Heart right ventricle (tissue), 16 donors: ENCODE measurements at regions of chr9 and their contacts with region 1.

Region 1: DNA sequence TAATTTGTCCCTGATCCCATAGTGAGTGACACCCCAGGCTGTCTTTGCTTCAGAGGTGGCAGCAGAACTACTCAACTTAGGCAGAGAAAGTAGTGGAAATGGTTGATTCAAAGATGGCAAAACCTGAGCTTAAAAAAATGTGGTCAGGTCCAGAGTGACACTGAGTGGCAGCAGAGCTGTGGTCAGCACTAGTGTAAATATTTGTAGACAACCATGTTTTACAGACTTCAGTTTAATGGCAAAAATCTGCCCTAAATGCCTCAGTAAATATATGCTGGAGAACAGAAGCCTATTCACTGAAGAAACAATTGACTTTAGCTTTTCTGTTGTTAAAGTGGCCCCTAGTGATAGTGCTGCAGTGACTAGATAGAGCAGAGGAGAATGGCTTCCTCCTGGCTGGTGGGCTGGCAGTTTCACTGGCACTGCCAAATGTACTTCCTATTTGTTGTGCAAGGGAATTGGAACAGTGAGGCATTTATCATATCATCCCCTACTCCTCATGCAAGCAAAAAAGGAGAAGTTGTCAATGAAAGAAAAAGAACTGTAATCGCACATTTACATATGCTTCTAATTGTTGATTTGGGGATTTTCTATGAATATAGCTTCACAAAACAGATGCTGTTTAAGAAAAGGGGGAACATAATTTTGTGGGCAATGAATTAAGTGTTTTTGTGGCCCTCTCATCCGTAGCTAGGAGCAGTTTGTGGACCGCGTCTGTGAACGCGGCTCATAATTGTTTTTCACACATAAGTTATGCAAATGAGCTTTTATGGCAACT is 12.0 kb downstream of the PBX3 start:
- DNase-seq: peak in 1 of 2 donors; percentile 20
- ATAC-seq: peak; percentile 23 to 80 (median 70)
- H3K4me3 ChIP-seq: peak overlapping the region in 7 of 10 donors; percentile 0 to 45 (median 32)
- H3K27ac ChIP-seq: peak overlapping the region in 2 of 10 donors; percentile 17 to 52
- H3K4me1 ChIP-seq: peaks cover 0 to 91% (median 69%) of the 10 kb centered on the region in 9 donors
- H3K27me3 ChIP-seq: no peaks in the 10 kb centered on the region
- CTCF ChIP-seq: no peak

Region 2: DNA sequence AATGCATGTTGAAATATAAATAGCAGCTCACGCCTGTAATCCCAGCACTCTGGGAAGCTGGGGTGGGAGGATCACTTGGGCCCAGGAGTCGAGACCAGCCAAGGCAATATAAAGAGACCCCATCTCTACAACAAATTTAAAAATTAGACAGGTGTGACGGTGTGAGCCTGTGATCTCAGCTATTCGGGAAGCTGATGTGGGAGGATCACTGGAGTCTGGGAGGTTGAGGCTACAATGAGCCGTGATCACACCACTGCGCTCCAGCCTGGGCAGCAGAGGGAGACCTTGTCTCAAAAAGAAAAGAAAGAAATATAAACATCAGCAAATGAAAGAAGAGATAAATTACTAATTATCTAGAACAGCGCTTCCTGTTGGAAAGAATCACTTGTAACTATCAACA is 157.2 kb before region 1 on chr9:
- intact Hi-C with region 1: no loop called
- DNase-seq: no peak
- ATAC-seq: no peak
- H3K4me3 ChIP-seq: no peak overlapping the region
- H3K27ac ChIP-seq: no peak overlapping the region
- H3K4me1 ChIP-seq: no peaks in the 10 kb centered on the region
- H3K27me3 ChIP-seq: no peaks in the 10 kb centered on the region
- CTCF ChIP-seq: peak in 1 of 9 donors; percentile 12

Region 3: DNA sequence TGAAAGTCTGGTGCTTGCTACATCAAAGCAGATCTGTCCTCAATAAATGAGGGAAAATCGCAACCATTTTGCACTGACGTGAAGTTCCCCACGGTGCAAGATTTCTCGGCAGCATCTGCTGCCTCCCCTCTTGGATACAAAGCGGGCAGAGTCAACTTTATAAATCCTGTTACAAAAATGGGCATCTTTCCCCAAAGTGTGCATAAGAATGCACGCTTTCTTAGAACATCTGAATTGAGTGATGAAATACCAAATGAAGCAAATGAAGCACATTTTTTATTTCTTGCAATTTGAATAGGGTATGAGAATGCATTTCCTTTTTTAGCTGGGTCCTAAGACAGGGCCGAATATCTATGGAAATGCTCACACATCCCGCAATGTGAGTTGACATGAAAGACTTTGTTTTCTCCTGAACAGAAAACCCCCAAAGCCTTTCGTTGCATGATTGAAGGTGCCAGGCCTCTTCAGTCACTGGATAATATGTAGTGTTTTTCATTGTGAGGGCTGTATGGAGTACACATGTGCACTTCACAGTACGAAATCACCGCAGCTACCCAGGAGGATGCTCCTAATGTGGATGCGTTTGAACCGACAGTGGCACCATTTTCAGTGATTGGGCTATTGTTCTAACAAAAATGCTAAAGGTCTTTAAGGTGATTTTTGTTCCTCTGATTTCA is 32.6 kb before region 1 on chr9:
- intact Hi-C with region 1: no loop called
- DNase-seq: no peak
- ATAC-seq: no peak
- H3K4me3 ChIP-seq: no peak overlapping the region
- H3K27ac ChIP-seq: no peak overlapping the region
- H3K4me1 ChIP-seq: no peaks in the 10 kb centered on the region
- H3K27me3 ChIP-seq: no peaks in the 10 kb centered on the region
- CTCF ChIP-seq: no peak

Region 4: DNA sequence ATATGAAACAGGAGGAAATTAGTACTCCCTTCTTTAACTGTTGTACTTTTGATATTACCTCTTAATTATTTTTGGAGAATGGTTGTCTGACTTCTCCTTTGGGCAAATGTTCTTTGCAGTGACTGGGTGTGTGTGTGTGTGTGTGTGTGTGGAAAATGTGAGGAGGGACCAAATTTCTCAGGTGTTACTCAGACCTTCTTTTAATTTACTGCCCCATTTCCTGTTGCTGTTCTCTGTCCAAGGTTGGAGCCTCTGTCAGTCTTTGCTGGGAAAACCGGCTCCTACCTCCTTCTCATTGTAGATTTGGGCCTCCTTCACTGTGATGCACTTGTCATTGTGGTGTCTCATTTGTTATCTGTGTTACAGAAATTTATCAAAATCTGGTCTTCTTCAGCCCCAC is 56.4 kb after region 1 on chr9:
- intact Hi-C with region 1: loop called in 3 of 10 experiments (anchors 5 to 10 kb)
- DNase-seq: no peak
- ATAC-seq: no peak
- H3K4me3 ChIP-seq: no peak overlapping the region
- H3K27ac ChIP-seq: no peak overlapping the region
- H3K4me1 ChIP-seq: peaks cover 0 to 11% (median 5%) of the 10 kb centered on the region in 9 donors
- H3K27me3 ChIP-seq: no peaks in the 10 kb centered on the region
- CTCF ChIP-seq: no peak

Region 5: GRCh38 chr9:125829743-125830142 is 70.6 kb after region 1 on chr9:
- intact Hi-C with region 1: loop called in 2 of 10 experiments (anchors 5 to 10 kb)
- DNase-seq: peak in 1 of 2 donors; percentile 21
- ATAC-seq: peak in 6 of 8 donors; percentile 58 to 86 (median 70)
- H3K4me3 ChIP-seq: peak overlapping the region in 9 of 10 donors; percentile 6 to 55 (median 49)
- H3K27ac ChIP-seq: peak overlapping the region in 4 of 10 donors; percentile 8 to 63 (median 22)
- H3K4me1 ChIP-seq: peaks cover 0 to 20% (median 0%) of the 10 kb centered on the region in 9 donors
- H3K27me3 ChIP-seq: no peaks in the 10 kb centered on the region
- CTCF ChIP-seq: no peak